ENCODE measurements at regions of chr12 and their contacts with region 1.

Region 1: GRCh38 chr12:50043854-50044253 is 13.5 kb upstream of the ASIC1 start:
- DNase-seq: no peak
- H3K4me3 ChIP-seq: no peak overlapping the region
- H3K27me3 ChIP-seq: peaks cover 2% of the 10 kb centered on the region
- CTCF ChIP-seq: no peak

Region 2: DNA sequence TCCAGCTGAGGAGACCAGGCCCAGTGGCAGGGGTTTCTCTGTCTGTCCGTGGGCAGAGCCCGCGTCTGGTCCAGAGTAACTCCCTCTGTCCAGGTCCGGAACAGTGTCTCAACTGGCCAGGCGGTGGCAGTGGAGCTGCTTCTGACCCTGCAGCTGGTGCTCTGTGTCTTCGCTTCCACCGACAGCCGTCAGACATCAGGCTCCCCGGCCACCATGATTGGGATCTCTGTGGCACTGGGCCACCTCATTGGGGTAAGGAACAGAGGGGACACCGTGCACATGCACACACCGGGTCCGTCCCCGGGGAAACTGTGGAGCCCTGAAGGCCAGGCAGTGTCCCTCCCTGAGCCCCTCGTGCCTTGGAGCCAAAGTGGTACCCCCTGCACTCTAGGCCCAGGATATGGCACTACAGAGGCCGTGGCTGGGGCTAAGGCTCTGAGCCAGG is 69.6 kb before region 1 on chr12:
- CTCF ChIA-PET with region 1: interaction called, 301 read pairs
- POLR2A ChIA-PET with region 1: no interaction called
- DNase-seq: no peak
- H3K4me3 ChIP-seq: no peak overlapping the region
- H3K27me3 ChIP-seq: peaks cover 14% of the 10 kb centered on the region
- CTCF ChIP-seq: peak; percentile 76

Region 3: GRCh38 chr12:49983892-49984291 is 60.0 kb before region 1 on chr12:
- CTCF ChIA-PET with region 1: interaction called, 77 read pairs
- POLR2A ChIA-PET with region 1: no interaction called
- DNase-seq: no peak
- H3K4me3 ChIP-seq: no peak overlapping the region
- H3K27me3 ChIP-seq: no peaks in the 10 kb centered on the region
- CTCF ChIP-seq: no peak

Region 4: GRCh38 chr12:50006789-50007436 is 36.9 kb before region 1 on chr12:
- CTCF ChIA-PET with region 1: interaction called, 17 read pairs
- POLR2A ChIA-PET with region 1: no interaction called
- DNase-seq: no peak
- H3K4me3 ChIP-seq: no peak overlapping the region
- H3K27me3 ChIP-seq: no peaks in the 10 kb centered on the region
- CTCF ChIP-seq: no peak

Region 5: DNA sequence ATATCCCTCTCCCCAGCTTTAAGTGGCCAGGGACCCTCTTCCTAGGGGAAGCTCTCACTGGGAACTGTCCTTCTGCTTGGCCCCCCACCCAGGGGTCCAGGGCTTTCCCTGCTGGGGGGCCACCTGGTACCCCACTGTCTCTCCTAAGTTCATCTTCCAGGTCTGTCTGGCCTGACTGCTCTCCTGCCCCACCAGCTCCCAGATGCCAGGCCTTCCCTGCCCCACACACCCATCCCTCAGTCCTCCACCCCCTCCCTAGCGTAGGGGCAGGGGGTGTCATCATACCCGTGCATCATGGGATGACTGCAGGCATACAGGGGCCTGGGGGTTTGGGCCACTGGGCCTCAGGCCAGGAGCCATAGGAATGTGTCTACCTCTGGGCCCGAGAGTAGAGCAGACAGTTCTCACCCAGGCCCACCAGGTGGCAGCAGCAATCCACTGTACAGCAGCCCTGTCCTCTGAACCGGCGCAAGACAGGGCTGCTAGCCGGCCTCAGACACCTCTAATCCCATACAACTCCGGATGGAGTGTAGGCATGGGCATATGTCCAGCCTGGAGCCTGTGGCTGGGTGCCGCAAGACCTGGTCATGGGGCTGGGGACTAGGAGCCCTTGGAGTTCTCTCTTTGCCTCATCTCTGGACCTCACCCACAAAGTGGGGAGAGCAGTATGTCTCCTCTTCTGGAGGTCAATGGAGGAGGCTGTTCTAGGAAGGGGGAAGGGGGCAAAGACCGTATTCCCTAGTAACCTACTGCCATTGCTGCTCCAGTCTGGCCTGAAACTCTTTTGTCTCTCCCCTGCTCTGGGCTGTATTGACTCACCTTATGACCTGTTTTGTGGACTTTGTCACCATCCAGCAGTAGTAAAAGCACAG is 31.3 kb after region 1 on chr12:
- CTCF ChIA-PET with region 1: interaction called, 102 read pairs
- POLR2A ChIA-PET with region 1: no interaction called
- DNase-seq: no peak
- H3K4me3 ChIP-seq: no peak overlapping the region
- H3K27me3 ChIP-seq: no peaks in the 10 kb centered on the region
- CTCF ChIP-seq: peak; percentile 91

Measured in BJ (cell line).